Naive thymus-derived CD4-positive, alpha-beta T cell (primary cell): ENCODE measurements at regions of chr4 and their contacts with region 1.

Region 1: GRCh38 chr4:1693129-1693896 is 9.2 kb upstream of the FAM53A start:
- DNase-seq: peak; percentile 65 to 83 (median 80)
- ATAC-seq: peak; percentile 97
- H3K4me3 ChIP-seq: no peak overlapping the region
- H3K4me3 Mint-ChIP-seq: no peak overlapping the region
- H3K27ac ChIP-seq: no peak overlapping the region
- H3K27ac Mint-ChIP-seq: peak overlapping the region in 8 of 9 donors; percentile 51 to 88 (median 72)
- H3K4me1 ChIP-seq: no peaks in the 10 kb centered on the region
- H3K4me1 Mint-ChIP-seq: peaks cover 0 to 5% (median 4%) of the 10 kb centered on the region in 7 donors
- H3K27me3 ChIP-seq: no peaks in the 10 kb centered on the region
- H3K27me3 Mint-ChIP-seq: no peaks in the 10 kb centered on the region

Region 2: GRCh38 chr4:1726146-1726934 is 33.0 kb after region 1 on chr4:
- CTCF ChIA-PET with region 1: interaction called, 212 read pairs
- POLR2A ChIA-PET with region 1: interaction called, 86 read pairs
- intact Hi-C with region 1: loop called (anchors 1 kb)
- DNase-seq: peak; percentile 77 to 89 (median 84)
- ATAC-seq: peak; percentile 69
- H3K4me3 ChIP-seq: peak overlapping the region; percentile 31
- H3K4me3 Mint-ChIP-seq: peak overlapping the region; percentile 32 to 97 (median 71)
- H3K27ac ChIP-seq: peak overlapping the region; percentile 88
- H3K27ac Mint-ChIP-seq: peak overlapping the region; percentile 18 to 99 (median 76)
- H3K4me1 ChIP-seq: peaks cover 37 to 54% of the 10 kb centered on the region in 2 donors
- H3K4me1 Mint-ChIP-seq: peaks cover 52 to 83% (median 59%) of the 10 kb centered on the region in 7 donors
- H3K27me3 ChIP-seq: no peaks in the 10 kb centered on the region
- H3K27me3 Mint-ChIP-seq: no peaks in the 10 kb centered on the region

Region 3: GRCh38 chr4:1792832-1793495 is 99.7 kb after region 1 on chr4 and contains the start of gene FGFR3:
- CTCF ChIA-PET with region 1: no interaction called
- POLR2A ChIA-PET with region 1: no interaction called
- intact Hi-C with region 1: no loop called
- DNase-seq: peak in 3 of 9 donors; percentile 16 to 71 (median 31)
- ATAC-seq: peak; percentile 90
- H3K4me3 ChIP-seq: no peak within 1 kb of the TSS
- H3K4me3 Mint-ChIP-seq: peak within 1 kb of the TSS in 8 of 10 donors; percentile 34 to 72 (median 46)
- H3K27ac ChIP-seq: no peak within 1 kb of the TSS
- H3K27ac Mint-ChIP-seq: peak within 1 kb of the TSS in 1 of 9 donors; percentile 56
- H3K4me1 ChIP-seq: peaks cover 0 to 5% of the 10 kb centered on the region in 2 donors
- H3K4me1 Mint-ChIP-seq: peaks cover 0 to 1% (median 0%) of the 10 kb centered on the region in 7 donors
- H3K27me3 ChIP-seq: peaks cover 0 to 12% of the 10 kb centered on the region in 2 donors
- H3K27me3 Mint-ChIP-seq: peaks cover 9 to 28% (median 11%) of the 10 kb centered on the region in 5 donors
- total RNA-seq, gene FGFR3: 1.0 TPM in 1 of 5 experiments, not detected in the others

Region 4: GRCh38 chr4:1809754-1810511 is 116.6 kb after region 1 on chr4:
- CTCF ChIA-PET with region 1: interaction called, 9 read pairs
- POLR2A ChIA-PET with region 1: no interaction called
- intact Hi-C with region 1: loop called in 1 of 2 experiments (anchors 1 kb)
- DNase-seq: peak; percentile 30 to 79 (median 61)
- ATAC-seq: peak; percentile 74
- H3K4me3 ChIP-seq: no peak overlapping the region
- H3K4me3 Mint-ChIP-seq: no peak overlapping the region
- H3K27ac ChIP-seq: no peak overlapping the region
- H3K27ac Mint-ChIP-seq: no peak overlapping the region
- H3K4me1 ChIP-seq: no peaks in the 10 kb centered on the region
- H3K4me1 Mint-ChIP-seq: peaks cover 0 to 2% (median 0%) of the 10 kb centered on the region in 7 donors
- H3K27me3 ChIP-seq: no peaks in the 10 kb centered on the region
- H3K27me3 Mint-ChIP-seq: no peaks in the 10 kb centered on the region